ENCODE measurements at regions of chr2 and their contacts with region 1.

Region 1: DNA sequence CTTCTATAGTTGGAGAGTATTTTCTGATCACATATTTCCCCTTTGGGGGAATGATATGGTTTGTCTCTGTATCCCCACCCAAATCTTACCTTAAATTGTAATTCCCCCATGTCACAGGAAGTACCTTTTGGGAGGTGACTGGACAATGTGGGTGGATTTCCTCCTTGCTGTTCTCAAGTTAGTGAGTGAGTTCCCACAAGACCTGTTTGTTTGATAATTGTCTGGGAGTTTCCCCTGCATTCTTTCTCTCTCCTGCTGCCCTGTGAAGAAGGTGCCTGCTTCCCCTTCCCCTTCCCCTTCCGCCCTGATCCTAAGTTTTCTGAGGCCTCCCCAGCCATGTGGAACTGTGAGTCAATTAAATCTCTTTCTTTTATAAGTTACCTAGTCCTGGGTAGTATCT is 222.7 kb upstream of the SLC39A10 start:
- DNase-seq: no peak
- H3K4me3 ChIP-seq: no peak overlapping the region
- H3K27ac ChIP-seq: no peak overlapping the region
- H3K4me1 ChIP-seq: no peaks in the 10 kb centered on the region
- H3K27me3 ChIP-seq: no peaks in the 10 kb centered on the region
- CTCF ChIP-seq: no peak

Region 2: GRCh38 chr2:195009202-195009601 is 425.1 kb before region 1 on chr2:
- CTCF ChIA-PET with region 1: no interaction called
- POLR2A ChIA-PET with region 1: no interaction called
- intact Hi-C with region 1: no loop called
- DNase-seq: no peak
- H3K4me3 ChIP-seq: no peak overlapping the region
- H3K27ac ChIP-seq: no peak overlapping the region
- H3K4me1 ChIP-seq: no peaks in the 10 kb centered on the region
- H3K27me3 ChIP-seq: no peaks in the 10 kb centered on the region
- CTCF ChIP-seq: no peak

Region 3: GRCh38 chr2:196399722-196400691 is 965.7 kb after region 1 on chr2:
- CTCF ChIA-PET with region 1: no interaction called
- POLR2A ChIA-PET with region 1: interaction called, 13 read pairs
- intact Hi-C with region 1: no loop called
- DNase-seq: peak; percentile 20 to 40
- H3K4me3 ChIP-seq: no peak overlapping the region; the same call in 1 of the 2 replicates
- H3K27ac ChIP-seq: peak overlapping the region; percentile 64
- H3K4me1 ChIP-seq: peaks cover 12% of the 10 kb centered on the region; the same call in 1 of the 2 replicates
- H3K27me3 ChIP-seq: no peaks in the 10 kb centered on the region
- CTCF ChIP-seq: no peak

Measured in PC-9 (cell line).